ENCODE measurements at regions of chr16 and their contacts with region 1.

Region 1: DNA sequence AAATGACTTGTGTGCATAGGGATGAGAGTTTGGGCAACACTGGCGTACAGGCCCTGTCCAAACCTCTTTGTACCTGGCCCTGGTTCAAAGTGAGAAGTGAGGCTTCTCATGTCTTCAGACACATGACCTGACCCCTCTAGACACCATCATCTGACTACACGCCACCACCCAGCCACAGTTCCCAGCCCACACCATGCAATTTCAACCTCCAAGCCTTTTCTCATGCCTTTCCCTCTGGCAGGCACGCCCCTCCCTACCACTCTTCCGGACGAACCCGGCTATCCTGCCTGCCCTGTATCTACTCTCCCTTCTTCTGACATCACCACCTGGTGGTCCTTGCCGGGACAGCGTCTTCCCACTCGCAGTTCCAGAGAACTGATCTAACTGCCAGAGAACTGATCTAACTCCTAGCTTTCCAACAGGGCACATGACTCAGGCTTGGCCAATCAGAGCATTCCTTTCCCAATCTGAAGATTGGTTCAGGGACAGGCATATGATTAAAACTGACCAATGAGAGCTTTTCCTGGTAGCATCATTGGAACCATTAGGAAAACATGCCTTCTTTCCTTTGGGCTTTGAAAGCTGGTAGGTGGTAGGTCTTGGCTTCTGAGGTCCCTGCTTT is 27.1 kb upstream of the IL21R start:
- DNase-seq: peak in 3 of 5 donors; percentile 15 to 60 (median 28)
- H3K4me3 ChIP-seq: no peak overlapping the region
- H3K4me3 Mint-ChIP-seq: no peak overlapping the region
- H3K27ac ChIP-seq: no peak overlapping the region
- H3K27ac Mint-ChIP-seq: no peak overlapping the region
- H3K4me1 ChIP-seq: peaks cover 67% of the 10 kb centered on the region
- H3K4me1 Mint-ChIP-seq: peaks cover 21 to 33% (median 26%) of the 10 kb centered on the region in 4 donors
- H3K27me3 ChIP-seq: no peaks in the 10 kb centered on the region
- H3K27me3 Mint-ChIP-seq: no peaks in the 10 kb centered on the region

Region 2: DNA sequence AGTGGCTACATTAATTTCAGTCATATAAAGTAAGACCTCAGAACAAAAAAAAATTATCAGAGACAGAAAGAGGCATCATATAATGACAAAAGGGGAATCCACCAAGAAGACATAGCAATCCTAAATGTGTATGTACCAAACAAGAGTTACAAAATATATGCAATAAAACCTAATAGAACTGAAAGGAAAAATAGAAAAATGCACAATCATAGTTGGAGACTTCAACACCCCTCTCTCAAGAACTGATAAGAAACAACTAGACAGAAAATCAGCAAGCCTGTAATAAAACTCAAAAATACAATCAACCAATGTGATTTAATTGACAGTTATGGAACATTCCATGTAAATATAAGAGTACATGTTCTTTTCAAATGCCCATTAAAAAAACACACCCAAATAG is 369.5 kb before region 1 on chr16:
- CTCF ChIA-PET with region 1: no interaction called
- POLR2A ChIA-PET with region 1: no interaction called
- intact Hi-C with region 1: no loop called
- DNase-seq: no peak
- H3K4me3 ChIP-seq: no peak overlapping the region
- H3K4me3 Mint-ChIP-seq: no peak overlapping the region
- H3K27ac ChIP-seq: no peak overlapping the region
- H3K27ac Mint-ChIP-seq: no peak overlapping the region
- H3K4me1 ChIP-seq: no peaks in the 10 kb centered on the region
- H3K4me1 Mint-ChIP-seq: no peaks in the 10 kb centered on the region
- H3K27me3 ChIP-seq: no peaks in the 10 kb centered on the region
- H3K27me3 Mint-ChIP-seq: peaks cover 19 to 23% of the 10 kb centered on the region in 2 donors

Region 3: DNA sequence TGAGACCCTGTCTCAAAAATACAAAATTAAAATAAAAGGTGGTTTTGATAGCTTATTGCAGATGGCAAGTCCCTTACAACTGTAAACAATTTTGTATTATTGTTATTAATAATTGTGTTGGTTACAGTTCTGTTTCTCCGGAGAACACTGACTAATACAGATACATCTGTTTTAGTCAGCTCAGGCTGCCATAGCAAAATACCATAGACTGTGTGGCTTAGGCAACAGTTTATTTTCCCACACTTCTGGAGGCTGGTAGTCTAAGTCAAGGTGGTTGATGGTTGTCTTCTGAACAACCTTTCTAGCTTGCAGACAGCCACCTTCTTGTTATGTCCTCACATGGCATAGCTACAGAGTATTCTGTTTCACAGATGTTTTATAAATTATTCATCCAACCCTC is 12.8 kb after region 1 on chr16:
- CTCF ChIA-PET with region 1: interaction called, 20 read pairs
- POLR2A ChIA-PET with region 1: no interaction called
- intact Hi-C with region 1: no loop called
- DNase-seq: no peak
- H3K4me3 ChIP-seq: no peak overlapping the region
- H3K4me3 Mint-ChIP-seq: no peak overlapping the region
- H3K27ac ChIP-seq: no peak overlapping the region
- H3K27ac Mint-ChIP-seq: no peak overlapping the region
- H3K4me1 ChIP-seq: no peaks in the 10 kb centered on the region
- H3K4me1 Mint-ChIP-seq: peaks cover 0 to 4% (median under 1%) of the 10 kb centered on the region in 4 donors
- H3K27me3 ChIP-seq: no peaks in the 10 kb centered on the region
- H3K27me3 Mint-ChIP-seq: peaks cover 0 to 1% of the 10 kb centered on the region in 2 donors

Region 4: GRCh38 chr16:27408012-27408601 is 33.2 kb after region 1 on chr16:
- CTCF ChIA-PET with region 1: interaction called, 5 read pairs
- POLR2A ChIA-PET with region 1: interaction called, 46 read pairs
- intact Hi-C with region 1: no loop called
- DNase-seq: peak in 1 of 5 donors; percentile 68
- H3K4me3 ChIP-seq: peak overlapping the region in 1 of 2 donors; percentile 0
- H3K4me3 Mint-ChIP-seq: peak overlapping the region; percentile 59 to 99 (median 90)
- H3K27ac ChIP-seq: peak overlapping the region; percentile 66
- H3K27ac Mint-ChIP-seq: peak overlapping the region; percentile 85 to 97 (median 90)
- H3K4me1 ChIP-seq: peaks cover 85% of the 10 kb centered on the region
- H3K4me1 Mint-ChIP-seq: peaks cover 54 to 89% (median 67%) of the 10 kb centered on the region in 4 donors
- H3K27me3 ChIP-seq: no peaks in the 10 kb centered on the region
- H3K27me3 Mint-ChIP-seq: no peaks in the 10 kb centered on the region

Measured in CD4-positive, alpha-beta memory T cell (primary cell).